Right cardiac atrium (tissue), 5 donors: ENCODE measurements at regions of chrX and their contacts with region 1.

Region 1: GRCh38 chrX:130916636-130917422 is 13.8 kb upstream of the ENOX2 start:
- DNase-seq: peak in 1 of 3 donors; percentile 33
- ATAC-seq: peak; percentile 45 to 50
- H3K4me3 ChIP-seq: no peak overlapping the region
- H3K27ac ChIP-seq: no peak overlapping the region
- H3K4me1 ChIP-seq: no peaks in the 10 kb centered on the region
- H3K27me3 ChIP-seq: no peaks in the 10 kb centered on the region

Region 2: DNA sequence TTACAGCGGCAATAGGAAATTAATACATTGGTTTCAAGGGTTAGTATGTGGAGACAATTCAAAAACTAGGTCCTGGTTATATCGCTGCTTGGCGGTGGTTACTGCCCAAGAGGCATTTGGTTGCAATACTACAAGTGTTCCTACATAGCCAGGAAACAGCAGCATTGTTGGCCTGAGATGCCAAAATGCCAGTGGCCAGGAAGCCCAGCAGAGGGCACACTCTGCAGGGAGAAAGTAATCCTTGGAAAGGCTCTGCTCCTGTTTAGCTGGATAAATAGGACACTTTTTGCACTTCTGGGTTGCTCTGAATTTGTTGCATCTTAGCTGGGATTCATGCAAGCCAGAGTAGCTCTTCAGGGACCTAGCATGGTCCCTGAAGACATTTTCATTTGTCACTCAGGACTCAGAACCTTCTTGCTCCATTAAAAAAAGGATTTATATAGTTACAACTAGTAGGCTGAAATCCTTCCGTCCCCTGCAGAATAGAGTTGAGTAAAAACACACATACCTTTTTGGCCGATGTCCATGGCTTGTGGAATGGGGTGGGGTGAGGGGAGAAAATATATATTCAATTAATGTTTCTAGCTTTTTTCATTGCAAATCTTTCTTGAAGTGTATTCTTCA is 523.3 kb before region 1 on chrX:
- intact Hi-C with region 1: loop called in 3 of 4 experiments (anchors 5 to 10 kb)
- DNase-seq: peak; percentile 30 to 60 (median 57)
- ATAC-seq: peak in 1 of 2 donors; percentile 39
- H3K4me3 ChIP-seq: no peak overlapping the region
- H3K27ac ChIP-seq: no peak overlapping the region
- H3K4me1 ChIP-seq: no peaks in the 10 kb centered on the region
- H3K27me3 ChIP-seq: no peaks in the 10 kb centered on the region

Region 3: GRCh38 chrX:130539721-130540321 is 377.0 kb before region 1 on chrX:
- intact Hi-C with region 1: loop called in 2 of 4 experiments (anchors 10 kb)
- DNase-seq: peak; percentile 22 to 65 (median 45)
- ATAC-seq: no peak
- H3K4me3 ChIP-seq: no peak overlapping the region
- H3K27ac ChIP-seq: no peak overlapping the region
- H3K4me1 ChIP-seq: no peaks in the 10 kb centered on the region
- H3K27me3 ChIP-seq: no peaks in the 10 kb centered on the region

Region 4: DNA sequence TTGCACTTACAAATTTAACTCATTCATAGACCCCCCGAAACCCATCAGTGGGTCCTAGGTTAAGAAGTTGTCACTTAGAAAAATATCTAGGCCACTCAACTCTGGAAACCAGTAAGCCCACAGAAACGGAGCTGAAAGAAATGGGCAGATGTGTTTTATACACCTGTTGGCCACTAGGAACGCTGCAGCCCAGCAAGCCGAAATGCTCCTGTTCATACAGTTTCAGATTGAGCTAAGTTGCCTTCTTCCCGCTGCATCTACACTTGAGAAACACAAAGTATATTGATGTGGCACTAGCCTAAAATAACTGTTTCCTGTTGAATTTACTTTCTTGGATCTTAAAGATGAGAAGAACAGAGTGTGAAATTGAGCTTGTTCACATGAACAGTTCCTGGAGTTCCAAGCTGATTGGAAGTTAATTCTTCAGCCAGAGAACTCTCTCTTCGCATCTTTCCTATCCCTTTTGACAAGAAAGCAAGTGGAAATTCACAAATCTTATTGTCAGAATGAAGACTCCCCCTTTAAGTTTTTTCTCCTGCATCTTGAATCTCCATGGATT is 340.9 kb before region 1 on chrX:
- intact Hi-C with region 1: loop called in 3 of 4 experiments (anchors 10 kb)
- DNase-seq: peak; percentile 36 to 65 (median 56)
- ATAC-seq: no peak
- H3K4me3 ChIP-seq: no peak overlapping the region
- H3K27ac ChIP-seq: no peak overlapping the region
- H3K4me1 ChIP-seq: no peaks in the 10 kb centered on the region
- H3K27me3 ChIP-seq: no peaks in the 10 kb centered on the region

Region 5: GRCh38 chrX:130952266-130953043 is 35.6 kb after region 1 on chrX:
- intact Hi-C with region 1: no loop called
- DNase-seq: no peak
- ATAC-seq: no peak
- H3K4me3 ChIP-seq: no peak overlapping the region
- H3K27ac ChIP-seq: no peak overlapping the region
- H3K4me1 ChIP-seq: no peaks in the 10 kb centered on the region
- H3K27me3 ChIP-seq: no peaks in the 10 kb centered on the region

Region 6: DNA sequence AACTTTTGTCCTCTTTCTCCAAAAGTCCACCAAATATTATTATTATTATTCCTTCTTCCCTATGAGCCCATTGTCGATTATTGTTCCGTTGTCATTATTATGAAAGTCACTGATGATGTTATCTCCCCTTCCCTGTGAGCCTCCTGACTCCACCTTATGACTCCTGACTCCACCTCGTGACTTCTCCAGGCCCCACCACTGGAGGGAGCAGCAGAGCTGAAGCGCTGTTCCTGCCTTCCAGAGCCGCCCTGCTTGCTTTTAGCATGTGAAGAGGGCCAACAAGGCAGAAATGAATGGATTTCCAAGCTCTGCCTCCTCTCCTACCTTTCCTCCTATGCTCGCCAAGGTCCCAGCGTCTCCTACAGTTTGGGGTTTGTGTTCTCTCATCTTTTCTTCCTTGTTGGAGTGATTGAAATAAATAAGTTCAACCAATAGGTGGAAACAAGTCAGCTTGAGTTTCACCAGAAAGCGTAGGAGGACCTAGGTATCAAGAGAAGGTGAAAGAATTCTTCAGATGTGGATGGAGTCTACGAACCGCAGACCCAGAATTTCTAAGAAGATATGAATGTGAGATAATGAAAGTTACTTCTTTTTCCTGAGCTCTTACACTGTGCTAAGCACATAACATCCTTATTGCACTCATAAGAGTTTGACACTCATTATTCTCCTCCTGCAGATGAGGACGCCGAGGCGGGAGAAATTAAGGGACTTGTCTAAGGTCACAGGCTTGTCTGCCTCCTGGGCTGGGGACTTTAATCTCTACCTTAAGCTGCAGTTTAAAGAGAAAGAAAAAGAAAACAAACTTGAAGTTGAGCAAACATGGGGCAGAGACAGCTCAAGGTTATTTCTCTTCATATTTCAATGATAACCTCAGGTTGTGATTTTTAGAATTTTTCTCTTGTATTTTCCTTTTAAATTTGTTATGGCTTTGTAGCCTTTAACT is 346.2 kb after region 1 on chrX:
- intact Hi-C with region 1: no loop called
- DNase-seq: no peak
- ATAC-seq: no peak
- H3K4me3 ChIP-seq: no peak overlapping the region
- H3K27ac ChIP-seq: no peak overlapping the region
- H3K4me1 ChIP-seq: no peaks in the 10 kb centered on the region
- H3K27me3 ChIP-seq: no peaks in the 10 kb centered on the region